Panc1 (cell line): ENCODE measurements at regions of chr1 and their contacts with region 1.

Region 1: GRCh38 chr1:20574686-20575540 is 14.0 kb upstream of the CDA start:
- DNase-seq: peak; percentile 41
- ATAC-seq: peak; percentile 96
- H3K4me3 ChIP-seq: no peak overlapping the region
- H3K27ac ChIP-seq: no peak overlapping the region
- H3K4me1 ChIP-seq: 0 out of 2 replicates have a peak, but pooled peaks cover 3% of the 10 kb centered on the region
- H3K27me3 ChIP-seq: no peaks in the 10 kb centered on the region
- CTCF ChIP-seq: peak; percentile 92

Region 2: GRCh38 chr1:20507564-20508410 is 67.1 kb before region 1 on chr1 and contains the start of gene MUL1:
- CTCF ChIA-PET with region 1: no interaction called
- POLR2A ChIA-PET with region 1: no interaction called
- in situ Hi-C with region 1: no loop called
- intact Hi-C with region 1: no loop called
- DNase-seq: peak; percentile 79
- ATAC-seq: peak; percentile 99
- H3K4me3 ChIP-seq: peak within 1 kb of the TSS; percentile 88 to 93
- H3K27ac ChIP-seq: peak within 1 kb of the TSS; percentile 85
- H3K4me1 ChIP-seq: peaks cover 11% of the 10 kb centered on the region; the same call in 1 of the 2 replicates
- H3K27me3 ChIP-seq: no peaks in the 10 kb centered on the region
- CTCF ChIP-seq: no peak
- total RNA-seq, gene MUL1: 39.4 TPM

Region 3: DNA sequence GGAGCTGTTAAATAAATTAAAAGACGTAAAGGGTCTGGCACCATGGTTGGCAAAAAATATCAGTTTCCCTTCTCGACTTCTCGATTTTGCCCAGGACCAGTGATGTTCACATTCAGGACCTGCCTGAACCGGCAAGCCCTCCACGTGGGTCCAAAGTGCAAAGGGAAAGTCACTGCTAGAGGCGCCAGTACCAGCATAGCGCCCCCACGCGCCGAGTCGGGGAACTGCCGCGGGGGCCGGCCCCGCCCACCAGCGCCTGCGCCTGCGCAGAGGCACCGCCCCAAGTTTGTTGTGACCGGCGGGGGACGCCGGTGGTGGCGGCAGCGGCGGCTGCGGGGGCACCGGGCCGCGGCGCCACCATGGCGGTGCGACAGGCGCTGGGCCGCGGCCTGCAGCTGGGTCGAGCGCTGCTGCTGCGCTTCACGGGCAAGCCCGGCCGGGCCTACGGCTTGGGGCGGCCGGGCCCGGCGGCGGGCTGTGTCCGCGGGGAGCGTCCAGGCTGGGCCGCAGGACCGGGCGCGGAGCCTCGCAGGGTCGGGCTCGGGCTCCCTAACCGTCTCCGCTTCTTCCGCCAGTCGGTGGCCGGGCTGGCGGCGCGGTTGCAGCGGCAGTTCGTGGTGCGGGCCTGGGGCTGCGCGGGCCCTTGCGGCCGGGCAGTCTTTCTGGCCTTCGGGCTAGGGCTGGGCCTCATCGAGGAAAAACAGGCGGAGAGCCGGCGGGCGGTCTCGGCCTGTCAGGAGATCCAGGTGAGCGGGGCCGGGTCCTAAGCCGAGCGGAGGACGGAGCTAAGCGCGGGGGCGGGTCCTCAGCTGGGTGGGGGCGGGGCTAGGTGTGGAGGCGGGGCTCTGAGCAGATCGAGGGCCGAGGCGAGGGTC is 58.5 kb after region 1 on chr1 and contains the start of gene PINK1:
- CTCF ChIA-PET with region 1: interaction called, 18 read pairs
- POLR2A ChIA-PET with region 1: no interaction called
- in situ Hi-C with region 1: no loop called
- intact Hi-C with region 1: no loop called
- DNase-seq: peak; percentile 39
- ATAC-seq: peak; percentile 93
- H3K4me3 ChIP-seq: peak within 1 kb of the TSS; percentile 70 to 81
- H3K27ac ChIP-seq: peak within 1 kb of the TSS; percentile 73
- H3K4me1 ChIP-seq: peaks cover 15% of the 10 kb centered on the region
- H3K27me3 ChIP-seq: no peaks in the 10 kb centered on the region
- CTCF ChIP-seq: peak; percentile 99
- total RNA-seq, gene PINK1: 32.1 TPM

Region 4: DNA sequence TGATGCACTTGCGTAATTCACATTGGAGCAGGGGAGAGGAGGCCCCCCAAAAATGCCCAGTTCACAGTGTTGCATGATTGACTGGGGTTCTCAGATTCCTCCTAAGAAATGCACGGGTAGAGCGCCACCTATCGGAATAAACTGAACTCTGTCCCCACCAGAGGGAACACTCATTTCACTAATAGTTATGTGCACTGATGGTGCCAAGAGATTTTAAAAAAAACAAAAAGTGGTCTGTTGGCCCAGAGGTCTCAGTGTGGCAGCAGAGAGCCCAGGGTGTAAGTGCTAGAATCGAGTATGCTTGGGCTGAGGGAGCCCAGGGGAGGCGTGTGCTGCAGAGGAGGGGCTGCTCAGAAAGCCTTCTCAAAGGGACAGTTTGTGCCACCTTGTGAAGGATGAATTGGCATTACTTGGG is 65.3 kb after region 1 on chr1:
- CTCF ChIA-PET with region 1: interaction called, 9 read pairs
- POLR2A ChIA-PET with region 1: no interaction called
- in situ Hi-C with region 1: no loop called
- intact Hi-C with region 1: loop called (anchors 1 kb)
- DNase-seq: peak; percentile 38
- ATAC-seq: peak; percentile 85
- H3K4me3 ChIP-seq: no peak overlapping the region
- H3K27ac ChIP-seq: no peak overlapping the region
- H3K4me1 ChIP-seq: no peaks in the 10 kb centered on the region
- H3K27me3 ChIP-seq: no peaks in the 10 kb centered on the region
- CTCF ChIP-seq: peak; percentile 91

Region 5: GRCh38 chr1:20903437-20903836 is 328.5 kb after region 1 on chr1:
- CTCF ChIA-PET with region 1: no interaction called
- POLR2A ChIA-PET with region 1: no interaction called
- in situ Hi-C with region 1: no loop called
- intact Hi-C with region 1: no loop called
- DNase-seq: no peak
- ATAC-seq: no peak
- H3K4me3 ChIP-seq: no peak overlapping the region
- H3K27ac ChIP-seq: no peak overlapping the region
- H3K4me1 ChIP-seq: no peaks in the 10 kb centered on the region; the same call in 1 of the 2 replicates
- H3K27me3 ChIP-seq: no peaks in the 10 kb centered on the region
- CTCF ChIP-seq: no peak